ENCODE measurements at regions of chrX and their contacts with region 1.

Region 1: GRCh38 chrX:37926700-37927099 is 79.3 kb upstream of the DYNLT3 start:
- DNase-seq: no peak
- ATAC-seq: no peak
- H3K4me3 ChIP-seq: no peak overlapping the region
- H3K27ac ChIP-seq: no peak overlapping the region
- H3K4me1 ChIP-seq: no peaks in the 10 kb centered on the region
- H3K27me3 ChIP-seq: peaks cover 0 to 37% (median 0%) of the 10 kb centered on the region in 7 donors
- CTCF ChIP-seq: peak in 8 of 9 donors; percentile 8 to 58 (median 50)

Region 2: GRCh38 chrX:37509349-37509748 is 417.4 kb before region 1 on chrX:
- intact Hi-C with region 1: loop called in 1 of 10 experiments (anchors 10 kb)
- DNase-seq: no peak
- ATAC-seq: peak in 1 of 8 donors; percentile 41
- H3K4me3 ChIP-seq: no peak overlapping the region
- H3K27ac ChIP-seq: no peak overlapping the region
- H3K4me1 ChIP-seq: no peaks in the 10 kb centered on the region
- H3K27me3 ChIP-seq: peaks cover 0 to 6% (median 0%) of the 10 kb centered on the region in 7 donors
- CTCF ChIP-seq: peak in 7 of 9 donors; percentile 30 to 46 (median 40)

Region 3: DNA sequence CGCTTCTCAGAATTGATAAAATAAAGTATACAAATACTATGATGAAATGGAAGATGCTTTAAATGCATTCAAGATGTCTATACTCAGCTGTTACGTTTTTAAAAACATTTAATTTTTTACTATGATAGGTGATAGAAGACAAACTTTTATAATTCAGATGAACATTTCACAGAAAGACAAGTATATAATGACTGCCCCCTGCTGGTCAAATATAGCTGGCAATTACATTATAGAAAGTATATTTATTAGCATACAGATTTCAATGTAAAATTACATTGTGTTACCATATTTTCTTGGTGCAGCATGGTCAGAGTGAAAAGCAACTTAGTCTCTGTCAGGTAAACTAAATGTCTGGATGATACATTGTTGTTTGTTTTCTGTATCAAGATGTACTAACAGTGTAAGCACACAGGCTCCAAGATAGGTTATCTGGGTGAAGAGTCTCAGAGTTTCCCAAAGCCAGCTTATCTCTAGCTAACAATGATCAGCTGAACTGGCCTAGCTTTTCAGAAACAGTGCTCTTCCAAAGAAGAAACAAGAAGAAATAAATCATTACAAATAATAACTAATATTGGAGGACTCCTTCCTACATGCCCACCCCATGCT is 239.9 kb after region 1 on chrX:
- intact Hi-C with region 1: loop called in 9 of 10 experiments (anchors 2 to 10 kb)
- DNase-seq: no peak
- ATAC-seq: no peak
- H3K4me3 ChIP-seq: no peak overlapping the region
- H3K27ac ChIP-seq: no peak overlapping the region
- H3K4me1 ChIP-seq: no peaks in the 10 kb centered on the region
- H3K27me3 ChIP-seq: peaks cover 0 to 12% (median 0%) of the 10 kb centered on the region in 7 donors
- CTCF ChIP-seq: peak; percentile 22 to 64 (median 56)

Region 4: DNA sequence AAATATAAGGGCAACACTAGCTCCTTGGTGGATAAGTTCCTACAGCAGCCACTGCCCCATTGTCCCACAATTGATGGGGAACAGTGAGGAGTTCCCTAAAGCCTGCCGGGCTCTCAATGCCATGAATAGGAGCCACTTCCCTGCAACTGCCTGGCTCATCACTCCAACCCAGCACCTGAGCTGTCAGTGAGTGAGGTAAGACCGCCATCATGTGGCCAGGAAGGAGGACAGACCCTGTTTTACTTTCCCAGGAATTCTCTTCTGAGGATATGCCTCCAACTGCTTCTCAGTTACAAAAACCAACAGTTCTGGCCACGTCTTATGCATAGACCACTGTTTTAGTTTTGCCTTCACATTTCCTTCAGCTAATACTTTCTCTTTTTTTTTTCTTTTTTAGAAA is 248.4 kb after region 1 on chrX:
- intact Hi-C with region 1: loop called in 2 of 10 experiments (anchors 10 kb)
- DNase-seq: no peak
- ATAC-seq: peak in 1 of 8 donors; percentile 44
- H3K4me3 ChIP-seq: no peak overlapping the region
- H3K27ac ChIP-seq: no peak overlapping the region
- H3K4me1 ChIP-seq: no peaks in the 10 kb centered on the region
- H3K27me3 ChIP-seq: peaks cover 0 to 20% (median 0%) of the 10 kb centered on the region in 7 donors
- CTCF ChIP-seq: peak in 6 of 9 donors; percentile 22 to 44 (median 28)

Region 5: DNA sequence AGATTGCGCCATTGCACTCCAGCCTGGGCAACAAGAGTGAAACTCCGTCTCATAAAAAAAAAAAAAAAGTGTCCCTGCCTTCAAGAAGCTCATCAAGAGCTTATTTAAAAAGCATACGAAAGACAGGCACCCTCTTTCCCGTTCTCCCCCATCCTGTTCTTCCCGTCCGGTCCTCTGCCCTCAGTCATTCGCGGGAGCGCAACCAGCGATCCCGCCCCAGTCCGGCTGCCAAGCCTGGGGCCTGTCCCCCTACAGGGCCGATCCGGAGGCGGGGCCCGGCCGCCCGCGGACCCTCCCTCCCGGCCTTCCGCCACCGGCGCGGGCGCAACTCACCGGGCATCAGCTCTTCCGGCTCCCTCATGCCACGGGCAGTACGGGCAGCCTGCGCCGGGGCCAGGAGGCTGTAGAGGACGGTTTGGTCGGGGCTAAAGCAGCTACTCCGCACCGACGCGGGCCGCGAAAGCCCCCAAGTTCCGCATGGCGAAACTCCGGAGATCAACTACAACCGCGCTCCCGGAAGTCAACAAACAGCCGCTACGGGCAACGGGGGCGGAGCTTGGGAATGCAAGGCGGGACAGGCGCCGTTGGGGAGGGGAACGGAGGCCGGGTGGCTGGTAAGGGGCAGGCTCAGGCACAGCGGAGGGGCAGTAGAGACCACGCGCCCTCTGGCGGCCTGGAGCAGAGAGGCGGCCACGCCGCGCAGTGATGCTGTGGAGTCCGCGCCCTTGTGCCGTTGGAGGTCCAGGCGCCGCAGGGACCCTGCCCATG is 400.5 kb after region 1 on chrX and contains the start of gene RPGR:
- intact Hi-C with region 1: loop called in 4 of 10 experiments (anchors 5 to 10 kb)
- DNase-seq: peak; percentile 93 to 94
- ATAC-seq: peak; percentile 98 to 99 (median 99)
- H3K4me3 ChIP-seq: peak within 1 kb of the TSS; percentile 46 to 89 (median 75)
- H3K27ac ChIP-seq: peak within 1 kb of the TSS; percentile 75 to 89 (median 85)
- H3K4me1 ChIP-seq: peaks cover 0 to 10% (median 0%) of the 10 kb centered on the region in 9 donors
- H3K27me3 ChIP-seq: no peaks in the 10 kb centered on the region
- CTCF ChIP-seq: peak; percentile 52 to 84 (median 75)
- total RNA-seq, gene RPGR: 3.8 to 10.2 (median 5.5) TPM

Region 6: GRCh38 chrX:38335382-38335781 is 408.7 kb after region 1 on chrX:
- intact Hi-C with region 1: loop called in 1 of 10 experiments (anchors 10 kb)
- DNase-seq: no peak
- ATAC-seq: no peak
- H3K4me3 ChIP-seq: no peak overlapping the region
- H3K27ac ChIP-seq: no peak overlapping the region
- H3K4me1 ChIP-seq: peaks cover 0 to 8% (median 0%) of the 10 kb centered on the region in 9 donors
- H3K27me3 ChIP-seq: peaks cover 0 to 7% (median 0%) of the 10 kb centered on the region in 7 donors
- CTCF ChIP-seq: peak in 8 of 9 donors; percentile 16 to 53 (median 28)

Measured in heart right ventricle (tissue), 16 donors.